ENCODE measurements at regions of chr2 and their contacts with region 1.

Region 1: DNA sequence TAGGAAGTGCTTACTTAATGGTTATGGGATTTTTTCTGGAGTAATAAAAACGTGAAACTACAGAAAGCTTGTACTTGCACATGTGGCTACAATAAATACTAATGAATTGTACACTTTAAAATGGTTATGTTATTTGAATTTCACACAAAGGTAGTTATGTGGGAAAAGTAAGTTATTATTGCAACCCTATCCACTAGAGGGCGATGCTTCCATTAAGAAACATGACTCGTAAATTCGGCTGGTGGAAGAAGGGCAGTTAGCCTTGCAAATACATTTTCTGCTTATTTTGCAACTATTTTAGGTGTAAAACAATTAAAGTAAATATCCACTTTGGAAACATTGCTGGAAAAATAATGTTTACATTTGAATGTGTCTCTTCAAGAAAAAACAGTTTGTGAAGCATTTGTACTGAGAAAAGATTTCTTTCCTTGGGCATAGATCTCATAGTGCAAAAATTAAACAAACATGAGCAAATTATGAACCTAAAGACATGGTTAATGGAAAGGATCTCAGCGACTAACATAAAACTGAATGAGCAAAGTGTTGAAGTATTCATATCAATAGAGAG is 68.1 kb upstream of the CSRNP3 start:
- DNase-seq: no peak
- ATAC-seq: no peak
- H3K4me3 Mint-ChIP-seq: no peak overlapping the region
- H3K27ac Mint-ChIP-seq: no peak overlapping the region
- H3K4me1 Mint-ChIP-seq: no peaks in the 10 kb centered on the region
- H3K27me3 Mint-ChIP-seq: peaks cover 13% of the 10 kb centered on the region
- CTCF ChIP-seq: peak; percentile 45

Region 2: GRCh38 chr2:165015052-165015642 is 386.2 kb before region 1 on chr2:
- CTCF ChIA-PET with region 1: no interaction called
- POLR2A ChIA-PET with region 1: no interaction called
- intact Hi-C with region 1: loop called (anchors 5 kb)
- DNase-seq: no peak
- ATAC-seq: peak; percentile 35
- H3K4me3 Mint-ChIP-seq: no peak overlapping the region
- H3K27ac Mint-ChIP-seq: no peak overlapping the region
- H3K4me1 Mint-ChIP-seq: no peaks in the 10 kb centered on the region
- H3K27me3 Mint-ChIP-seq: no peaks in the 10 kb centered on the region
- CTCF ChIP-seq: peak; percentile 82

Region 3: DNA sequence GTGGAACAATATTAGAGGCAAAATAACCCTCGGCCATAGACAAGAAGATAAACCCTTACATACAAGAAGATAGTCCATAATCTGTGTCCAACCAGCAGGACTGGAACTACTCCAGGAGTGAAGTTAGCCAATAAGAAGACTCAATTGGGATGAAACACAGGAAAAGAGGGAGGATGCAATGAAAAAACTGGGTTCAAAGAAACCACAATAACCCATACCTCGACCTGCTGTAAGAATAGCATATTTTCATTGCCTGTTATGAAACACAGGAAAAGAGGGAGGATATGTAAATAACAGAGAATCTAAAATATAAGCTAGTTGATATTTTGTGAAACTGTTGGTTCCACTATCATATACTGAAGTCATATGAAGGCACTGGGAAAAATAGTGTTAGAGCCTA is 19.0 kb before region 1 on chr2:
- CTCF ChIA-PET with region 1: no interaction called
- POLR2A ChIA-PET with region 1: no interaction called
- intact Hi-C with region 1: loop called (anchors 1 kb)
- DNase-seq: no peak
- ATAC-seq: no peak
- H3K4me3 Mint-ChIP-seq: no peak overlapping the region
- H3K27ac Mint-ChIP-seq: no peak overlapping the region
- H3K4me1 Mint-ChIP-seq: no peaks in the 10 kb centered on the region
- H3K27me3 Mint-ChIP-seq: peaks cover 3% of the 10 kb centered on the region
- CTCF ChIP-seq: no peak

Region 4: DNA sequence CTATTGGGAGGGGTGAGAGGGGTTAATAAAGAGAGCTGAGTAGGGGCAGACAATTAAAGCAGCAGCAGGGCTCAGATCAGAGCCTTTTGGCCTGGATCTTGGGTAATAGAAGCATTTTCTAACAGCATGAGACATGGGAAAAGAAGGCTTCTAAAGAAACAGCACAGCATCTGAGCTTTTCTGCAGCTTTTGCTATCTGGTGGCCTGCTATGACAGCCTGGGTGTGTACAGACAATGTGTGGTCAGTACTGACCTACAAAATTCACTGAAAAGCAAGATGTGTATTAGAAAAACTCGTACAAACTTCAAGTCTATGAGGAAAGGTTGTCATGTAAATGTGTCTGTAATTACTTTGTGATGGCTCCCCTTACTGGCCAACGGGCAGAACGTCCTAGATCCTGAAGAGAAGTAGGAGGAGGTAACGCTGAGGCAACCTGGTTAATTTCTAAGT is 297.1 kb after region 1 on chr2:
- CTCF ChIA-PET with region 1: interaction called, 30 read pairs
- POLR2A ChIA-PET with region 1: no interaction called
- intact Hi-C with region 1: loop called (anchors 1 kb)
- DNase-seq: no peak
- ATAC-seq: peak; percentile 71
- H3K4me3 Mint-ChIP-seq: no peak overlapping the region
- H3K27ac Mint-ChIP-seq: no peak overlapping the region
- H3K4me1 Mint-ChIP-seq: peaks cover 4% of the 10 kb centered on the region
- H3K27me3 Mint-ChIP-seq: no peaks in the 10 kb centered on the region
- CTCF ChIP-seq: no peak

Region 5: DNA sequence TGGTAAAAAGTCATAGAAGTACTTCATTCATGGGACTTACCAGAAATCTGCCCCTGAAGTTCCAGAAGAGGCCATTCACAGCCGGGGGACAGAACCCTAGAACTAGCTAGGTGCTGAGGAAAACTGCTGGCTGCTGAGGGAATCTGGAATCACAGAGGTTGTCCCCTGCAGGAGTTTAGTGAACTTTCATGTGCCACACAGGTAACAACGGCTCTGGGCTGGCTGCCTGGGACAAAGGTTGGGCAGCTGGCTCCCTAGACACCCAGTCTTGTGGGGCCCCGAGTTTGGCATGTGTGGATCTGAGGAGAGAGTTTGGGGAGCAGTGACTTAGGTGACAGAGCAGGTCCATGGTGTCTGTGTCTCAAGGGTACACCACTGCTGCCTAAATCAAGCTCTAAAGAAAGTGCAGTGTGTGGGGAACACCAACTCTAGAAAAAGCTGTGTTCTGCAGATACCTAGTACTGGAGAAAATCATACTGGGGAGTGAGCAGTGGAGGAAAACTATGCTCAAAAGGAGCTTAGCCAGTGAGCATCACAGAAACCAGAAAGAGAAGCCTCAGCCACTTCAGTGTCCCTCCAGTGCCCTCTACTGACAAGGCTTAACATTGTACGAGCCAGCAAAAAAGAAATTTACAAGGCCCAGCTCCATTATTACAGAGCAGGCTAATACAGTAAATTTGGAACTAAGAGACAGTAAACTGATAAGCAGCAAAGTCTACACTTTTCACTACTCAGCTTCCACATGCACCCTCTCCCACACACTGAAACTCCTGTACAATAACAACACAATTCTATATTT is 377.5 kb after region 1 on chr2:
- CTCF ChIA-PET with region 1: interaction called, 6 read pairs
- POLR2A ChIA-PET with region 1: no interaction called
- intact Hi-C with region 1: loop called (anchors 1 kb)
- DNase-seq: no peak
- ATAC-seq: no peak
- H3K4me3 Mint-ChIP-seq: no peak overlapping the region
- H3K27ac Mint-ChIP-seq: no peak overlapping the region
- H3K4me1 Mint-ChIP-seq: peaks cover 18% of the 10 kb centered on the region
- H3K27me3 Mint-ChIP-seq: no peaks in the 10 kb centered on the region
- CTCF ChIP-seq: no peak

Region 6: DNA sequence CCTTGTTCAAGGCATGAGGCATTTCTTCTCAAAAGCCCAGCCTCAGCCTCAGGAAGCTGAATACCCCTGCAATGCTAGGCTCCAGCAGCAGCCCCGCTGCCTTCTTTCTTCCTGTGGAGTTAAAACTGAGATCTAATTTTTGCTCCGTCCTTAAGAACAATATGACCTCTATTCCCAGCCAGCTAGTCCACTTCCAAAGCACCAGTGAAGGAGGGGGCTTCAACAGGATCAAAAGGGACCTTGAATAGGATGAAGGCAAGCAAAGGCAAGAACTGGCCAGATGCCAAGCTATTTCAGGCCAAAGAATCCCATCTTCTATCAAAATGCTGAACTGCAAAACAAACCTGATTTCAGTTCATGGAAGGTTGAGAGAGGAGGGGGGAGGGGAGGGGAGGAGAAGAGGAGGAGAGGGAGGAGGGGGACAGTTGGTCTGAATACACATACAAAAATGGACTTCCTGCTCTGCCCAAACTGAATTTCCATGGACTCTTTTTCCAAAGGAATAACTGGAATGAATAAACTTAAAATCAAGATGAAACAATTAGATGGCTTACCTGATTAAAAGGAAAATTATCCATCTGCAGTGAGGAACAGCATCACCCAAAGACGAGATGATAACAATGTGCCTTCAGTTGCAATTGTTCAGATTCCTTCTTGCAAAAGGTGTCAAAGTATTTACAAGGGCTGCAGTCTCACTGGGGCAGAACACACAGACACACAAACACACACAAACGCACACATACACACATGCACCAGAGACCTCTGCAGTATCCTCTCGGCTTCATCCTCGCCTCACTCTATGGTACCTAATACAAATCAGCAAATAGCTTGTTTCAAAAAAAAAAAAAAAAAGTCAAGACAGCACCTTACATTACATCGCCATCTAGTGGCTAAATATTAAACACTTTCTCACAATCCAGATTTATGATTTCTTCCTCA is 726.1 kb after region 1 on chr2 and contains the start of gene SCN1A:
- CTCF ChIA-PET with region 1: interaction called, 7 read pairs
- POLR2A ChIA-PET with region 1: no interaction called
- intact Hi-C with region 1: loop called (anchors 1 kb)
- DNase-seq: no peak
- ATAC-seq: no peak
- H3K4me3 Mint-ChIP-seq: no peak within 1 kb of the TSS
- H3K27ac Mint-ChIP-seq: no peak within 1 kb of the TSS
- H3K4me1 Mint-ChIP-seq: peaks cover 2% of the 10 kb centered on the region
- H3K27me3 Mint-ChIP-seq: peaks cover 13% of the 10 kb centered on the region
- CTCF ChIP-seq: no peak
- total RNA-seq, gene SCN1A: not detected in 2 replicates

Measured in activated B cell treated with CpG ODN at 0.5 μM for 24 hours (primary cell).